ENCODE measurements at regions of chr1 and their contacts with region 1.

Region 1: GRCh38 chr1:39398278-39399021 is 93.0 kb upstream of the BMP8A start:
- DNase-seq: peak; percentile 91
- H3K4me3 Mint-ChIP-seq: peak overlapping the region; percentile 40
- H3K27ac Mint-ChIP-seq: peak overlapping the region; percentile 94
- H3K4me1 Mint-ChIP-seq: peaks cover 81% of the 10 kb centered on the region
- H3K27me3 Mint-ChIP-seq: no peaks in the 10 kb centered on the region
- CTCF ChIP-seq: no peak

Region 2: GRCh38 chr1:38012363-38013226 is 1385.9 kb before region 1 on chr1 and contains the start of gene UTP11:
- CTCF ChIA-PET with region 1: no interaction called
- intact Hi-C with region 1: loop called (anchors 10 kb)
- DNase-seq: peak; percentile 91
- H3K4me3 Mint-ChIP-seq: peak within 1 kb of the TSS; percentile 100
- H3K27ac Mint-ChIP-seq: peak within 1 kb of the TSS; percentile 95
- H3K4me1 Mint-ChIP-seq: peaks cover 15% of the 10 kb centered on the region
- H3K27me3 Mint-ChIP-seq: no peaks in the 10 kb centered on the region
- CTCF ChIP-seq: no peak
- total RNA-seq, gene UTP11: 38.5 and 43.0 TPM in 2 replicates

Region 3: DNA sequence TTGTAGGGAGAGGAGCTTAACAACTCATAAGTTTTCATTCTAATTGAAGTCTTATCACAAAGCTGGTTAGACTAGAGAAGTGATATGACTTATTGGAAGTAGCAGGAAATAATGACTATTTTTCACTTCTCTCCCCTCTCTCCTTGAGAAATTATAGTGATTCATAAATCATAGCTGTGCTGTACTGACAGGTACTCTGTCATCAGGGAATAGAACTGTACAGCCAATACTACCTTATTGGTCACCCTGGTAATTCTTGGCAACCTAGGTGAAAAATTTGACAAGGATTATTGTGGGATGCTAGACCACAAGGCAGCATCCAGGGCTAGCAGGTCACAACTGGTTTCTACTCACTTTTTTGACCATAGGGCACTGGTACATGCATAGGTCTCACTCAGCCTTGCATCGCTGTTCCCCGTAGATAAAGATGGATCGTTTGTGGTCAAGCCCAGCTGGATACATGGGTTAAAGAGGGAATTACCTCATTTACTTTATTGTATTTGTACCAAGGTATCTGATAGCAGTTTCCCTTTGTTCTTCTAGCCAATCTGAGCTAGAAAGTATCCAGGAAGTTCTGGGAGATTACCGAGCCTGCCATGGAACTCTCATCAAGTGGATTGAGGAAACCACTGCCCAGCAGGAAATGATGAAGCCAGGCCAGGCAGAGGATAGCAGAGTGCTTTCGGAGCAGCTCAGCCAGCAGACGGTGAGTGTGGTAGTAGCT is 80.4 kb before region 1 on chr1:
- CTCF ChIA-PET with region 1: no interaction called
- intact Hi-C with region 1: no loop called
- DNase-seq: no peak
- H3K4me3 Mint-ChIP-seq: no peak overlapping the region
- H3K27ac Mint-ChIP-seq: no peak overlapping the region
- H3K4me1 Mint-ChIP-seq: no peaks in the 10 kb centered on the region
- H3K27me3 Mint-ChIP-seq: no peaks in the 10 kb centered on the region
- CTCF ChIP-seq: no peak

Region 4: DNA sequence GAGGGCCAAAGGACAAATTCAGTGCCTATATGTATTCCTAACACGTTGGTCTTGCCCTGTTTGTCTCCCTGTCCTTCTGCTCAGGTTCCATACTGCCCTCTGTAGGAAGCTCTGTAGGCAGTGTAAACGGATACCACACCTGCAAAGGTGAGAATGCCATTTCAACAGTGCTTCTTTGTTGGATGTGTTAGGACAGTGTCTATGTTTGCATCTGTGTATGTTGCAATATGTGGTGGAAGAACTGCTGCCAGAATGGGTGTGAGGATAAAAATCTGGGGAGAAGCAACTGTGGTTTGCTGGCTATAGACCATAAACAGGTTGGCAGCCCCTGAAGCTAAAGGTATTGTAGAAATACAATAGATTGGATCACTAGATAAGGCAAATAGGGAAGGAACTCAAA is 20.1 kb before region 1 on chr1:
- CTCF ChIA-PET with region 1: interaction called, 15 read pairs
- intact Hi-C with region 1: loop called (anchors 1 kb)
- DNase-seq: peak; percentile 74
- H3K4me3 Mint-ChIP-seq: no peak overlapping the region
- H3K27ac Mint-ChIP-seq: peak overlapping the region; percentile 26
- H3K4me1 Mint-ChIP-seq: peaks cover 16% of the 10 kb centered on the region
- H3K27me3 Mint-ChIP-seq: no peaks in the 10 kb centered on the region
- CTCF ChIP-seq: peak; percentile 46

Region 5: DNA sequence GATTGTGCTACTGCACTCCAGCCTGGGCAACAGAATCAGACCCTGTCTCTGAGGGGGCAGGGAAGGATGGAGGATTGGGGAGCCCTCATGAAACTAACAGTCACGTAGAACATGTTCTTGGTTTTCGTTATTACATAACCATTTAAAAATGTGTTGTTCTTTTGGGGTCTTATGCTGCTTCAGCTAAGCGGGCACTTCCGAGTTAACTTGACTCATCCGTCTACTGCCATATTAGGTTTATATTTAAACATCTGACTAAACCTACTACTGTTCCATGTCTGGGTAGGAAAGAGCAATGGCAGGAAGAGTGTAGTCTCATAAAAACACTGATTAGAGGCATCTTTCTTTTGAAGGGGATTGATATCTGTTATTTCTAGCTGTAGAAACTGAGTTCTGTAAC is 33.5 kb after region 1 on chr1:
- CTCF ChIA-PET with region 1: no interaction called
- intact Hi-C with region 1: no loop called
- DNase-seq: no peak
- H3K4me3 Mint-ChIP-seq: peak overlapping the region; percentile 21
- H3K27ac Mint-ChIP-seq: peak overlapping the region; percentile 47
- H3K4me1 Mint-ChIP-seq: peaks cover 61% of the 10 kb centered on the region
- H3K27me3 Mint-ChIP-seq: no peaks in the 10 kb centered on the region
- CTCF ChIP-seq: no peak

Region 6: GRCh38 chr1:39545531-39545930 is 147.1 kb after region 1 on chr1:
- CTCF ChIA-PET with region 1: no interaction called
- intact Hi-C with region 1: no loop called
- DNase-seq: no peak
- H3K4me3 Mint-ChIP-seq: no peak overlapping the region
- H3K27ac Mint-ChIP-seq: no peak overlapping the region
- H3K4me1 Mint-ChIP-seq: no peaks in the 10 kb centered on the region
- H3K27me3 Mint-ChIP-seq: no peaks in the 10 kb centered on the region
- CTCF ChIP-seq: no peak